Activated CD4-positive, alpha-beta T cell treated with anti-CD3 and anti-CD28 coated beads, Interleukin-2, amount 10 ng/mL, durations not matched to agents 7 days and 5 days (primary cell): ENCODE measurements at regions of chr3 and their contacts with region 1.

Region 1: DNA sequence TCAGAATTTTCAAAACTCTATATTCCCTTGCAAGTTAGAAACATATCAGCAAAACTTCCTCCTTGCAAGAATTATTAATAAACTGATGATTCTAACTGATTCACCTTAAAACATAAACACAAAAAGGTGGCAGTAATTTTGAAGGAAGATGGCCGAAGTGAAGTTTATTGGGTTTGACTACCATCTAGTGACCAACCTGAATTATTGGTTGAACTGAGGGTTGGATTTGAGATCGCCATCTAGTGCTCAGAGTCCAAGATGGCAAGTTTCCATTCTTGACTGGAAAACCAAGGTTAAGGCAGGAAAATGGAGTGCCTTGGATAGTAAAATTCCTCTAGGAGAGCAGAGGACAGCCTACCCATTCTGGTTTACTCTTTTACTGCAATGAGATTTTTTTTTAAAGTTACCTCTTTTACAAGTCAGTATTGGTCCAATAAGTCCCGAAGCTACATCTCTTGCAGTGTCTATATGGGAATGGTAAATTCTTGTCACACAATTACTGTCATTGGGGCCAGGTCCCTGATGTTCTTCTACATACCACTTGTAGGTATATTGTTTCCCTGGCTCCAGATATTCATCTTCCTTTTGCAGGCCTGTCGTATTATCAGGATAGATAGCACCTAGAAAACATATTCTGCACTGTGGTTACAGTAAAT is 51.6 kb upstream of the CP start:
- DNase-seq: peak; percentile 54
- H3K4me3 Mint-ChIP-seq: no peak overlapping the region
- H3K27ac Mint-ChIP-seq: no peak overlapping the region
- H3K4me1 Mint-ChIP-seq: peaks cover 13% of the 10 kb centered on the region
- H3K27me3 Mint-ChIP-seq: peaks cover 9% of the 10 kb centered on the region

Region 2: DNA sequence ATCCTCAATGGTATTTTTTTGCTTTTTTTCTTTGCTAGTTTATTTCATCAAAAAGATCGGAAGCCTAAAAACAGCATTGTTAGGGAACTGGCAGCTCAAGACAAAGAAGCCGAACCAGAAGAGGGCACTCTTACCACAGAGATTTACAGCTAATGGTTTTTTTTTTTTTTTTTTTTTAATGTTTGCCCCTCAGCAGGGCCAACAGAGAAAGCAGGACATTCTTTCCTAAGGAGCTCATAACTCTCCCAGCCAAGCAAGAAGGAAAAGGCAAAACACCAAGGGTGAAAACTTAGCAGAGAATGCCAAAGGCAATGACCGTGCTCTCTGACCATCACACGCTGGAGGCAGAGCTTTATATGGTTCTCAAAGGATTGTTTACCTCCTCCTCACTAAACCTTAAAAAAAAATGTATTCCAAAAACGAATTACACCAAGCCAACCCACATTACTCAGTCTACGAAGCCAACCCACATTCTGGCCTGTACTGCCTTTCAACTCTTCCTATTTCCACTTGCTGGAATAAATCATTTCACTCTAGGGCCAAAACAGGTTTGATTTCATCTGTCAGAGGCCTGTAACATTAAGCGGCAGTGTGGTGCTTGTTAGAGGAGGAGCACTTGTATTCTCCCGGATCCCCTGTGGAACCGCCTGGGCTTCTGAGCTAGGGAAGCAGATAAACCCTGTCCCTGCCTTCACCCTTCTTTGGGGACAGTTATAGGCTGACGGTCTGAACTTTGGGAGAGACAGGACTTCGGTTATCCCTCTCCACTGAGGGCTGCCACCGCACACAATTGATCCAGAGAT is 317.5 kb before region 1 on chr3:
- CTCF ChIA-PET with region 1: interaction called, 12 read pairs
- POLR2A ChIA-PET with region 1: no interaction called
- DNase-seq: peak; percentile 49
- H3K4me3 Mint-ChIP-seq: no peak overlapping the region
- H3K27ac Mint-ChIP-seq: no peak overlapping the region
- H3K4me1 Mint-ChIP-seq: peaks cover 11% of the 10 kb centered on the region
- H3K27me3 Mint-ChIP-seq: peaks cover 3% of the 10 kb centered on the region